ENCODE measurements at regions of chr20 and their contacts with region 1.

Region 1: DNA sequence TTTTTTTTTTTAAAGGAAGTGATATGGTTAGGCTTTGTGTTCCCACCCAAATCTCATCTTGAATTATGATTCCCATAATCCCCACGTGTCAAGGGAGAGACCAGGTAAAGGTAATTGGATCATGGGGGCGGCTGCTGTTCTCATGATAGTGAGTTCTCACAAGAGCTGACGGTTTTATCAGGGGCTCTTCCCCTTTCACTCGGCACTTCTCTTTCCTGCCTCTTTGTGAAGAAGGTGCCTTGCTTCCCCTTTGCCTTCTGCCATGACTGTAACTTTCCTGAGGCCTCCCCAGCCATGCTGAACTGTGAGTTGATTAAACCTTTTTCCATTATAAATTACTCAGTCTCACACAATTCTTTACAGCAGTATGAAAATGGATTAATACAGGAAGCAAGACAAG is 64.3 kb downstream of the ZFP64 start:
- DNase-seq: no peak
- H3K4me3 Mint-ChIP-seq: no peak overlapping the region
- H3K27ac Mint-ChIP-seq: no peak overlapping the region
- H3K4me1 Mint-ChIP-seq: no peaks in the 10 kb centered on the region
- H3K27me3 Mint-ChIP-seq: no peaks in the 10 kb centered on the region
- CTCF ChIP-seq: no peak

Region 2: GRCh38 chr20:52150440-52151258 is 23.3 kb after region 1 on chr20:
- CTCF ChIA-PET with region 1: interaction called, 12 read pairs
- intact Hi-C with region 1: loop called (anchors 1 kb)
- DNase-seq: peak; percentile 52
- H3K4me3 Mint-ChIP-seq: no peak overlapping the region
- H3K27ac Mint-ChIP-seq: no peak overlapping the region
- H3K4me1 Mint-ChIP-seq: no peaks in the 10 kb centered on the region
- H3K27me3 Mint-ChIP-seq: no peaks in the 10 kb centered on the region
- CTCF ChIP-seq: peak; percentile 79

Region 3: DNA sequence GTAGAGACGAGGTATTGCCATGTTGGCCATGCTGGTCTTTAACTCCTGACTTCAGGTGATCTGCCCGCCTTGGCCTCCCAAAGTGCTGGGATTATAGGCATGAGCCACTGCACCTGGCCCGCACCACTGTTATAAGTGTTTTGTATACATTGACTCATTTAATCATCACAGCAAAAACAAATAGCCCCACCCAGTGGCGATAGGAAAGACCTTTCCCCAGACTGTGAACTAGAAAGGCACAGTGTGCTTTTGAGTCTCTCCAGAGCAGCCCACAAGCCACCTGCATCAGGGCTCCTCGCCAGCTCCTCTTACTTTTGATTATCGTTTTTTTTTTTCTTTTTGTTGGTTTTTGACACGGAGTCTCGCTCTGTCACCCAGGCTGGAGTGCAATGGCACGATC is 92.1 kb after region 1 on chr20:
- CTCF ChIA-PET with region 1: no interaction called
- intact Hi-C with region 1: loop called (anchors 5 kb)
- DNase-seq: peak; percentile 12
- H3K4me3 Mint-ChIP-seq: no peak overlapping the region
- H3K27ac Mint-ChIP-seq: no peak overlapping the region
- H3K4me1 Mint-ChIP-seq: no peaks in the 10 kb centered on the region
- H3K27me3 Mint-ChIP-seq: peaks cover 13% of the 10 kb centered on the region
- CTCF ChIP-seq: no peak

Region 4: GRCh38 chr20:52379723-52380336 is 252.5 kb after region 1 on chr20:
- CTCF ChIA-PET with region 1: interaction called, 3 read pairs
- intact Hi-C with region 1: loop called (anchors 1 kb)
- DNase-seq: peak; percentile 76
- H3K4me3 Mint-ChIP-seq: no peak overlapping the region
- H3K27ac Mint-ChIP-seq: no peak overlapping the region
- H3K4me1 Mint-ChIP-seq: no peaks in the 10 kb centered on the region
- H3K27me3 Mint-ChIP-seq: peaks cover 56% of the 10 kb centered on the region
- CTCF ChIP-seq: peak; percentile 97

Measured in Calu3 (cell line).